ENCODE measurements at regions of chr19 and their contacts with region 1.

Region 1: GRCh38 chr19:4909897-4910593 is 744 bp downstream of the UHRF1 start:
- DNase-seq: peak; percentile 78 to 99 (median 93)

Region 2: GRCh38 chr19:4861077-4861543 is 48.9 kb before region 1 on chr19:
- intact Hi-C with region 1: no loop called
- DNase-seq: no peak

Region 3: DNA sequence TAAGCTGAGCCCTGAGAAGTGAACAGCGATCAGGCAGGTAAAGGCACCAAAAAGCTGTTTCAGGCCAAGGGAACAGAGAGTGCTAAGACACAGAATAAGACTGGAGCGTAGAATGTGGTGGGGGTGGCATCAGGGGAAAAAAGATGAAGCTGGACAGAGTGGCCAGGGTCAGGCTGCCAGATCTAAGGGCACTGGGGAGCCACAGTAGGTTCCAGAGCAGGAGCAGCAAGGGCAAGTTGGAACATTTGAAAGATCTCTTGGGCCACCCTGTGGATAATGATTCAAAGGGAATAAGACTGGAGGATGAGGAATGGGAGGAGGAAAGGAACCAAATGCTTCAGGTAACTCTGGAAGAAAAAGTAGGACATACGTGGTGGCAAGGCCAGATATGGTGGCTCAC is 36.1 kb before region 1 on chr19:
- intact Hi-C with region 1: loop called (anchors 2 kb)
- DNase-seq: no peak

Region 4: DNA sequence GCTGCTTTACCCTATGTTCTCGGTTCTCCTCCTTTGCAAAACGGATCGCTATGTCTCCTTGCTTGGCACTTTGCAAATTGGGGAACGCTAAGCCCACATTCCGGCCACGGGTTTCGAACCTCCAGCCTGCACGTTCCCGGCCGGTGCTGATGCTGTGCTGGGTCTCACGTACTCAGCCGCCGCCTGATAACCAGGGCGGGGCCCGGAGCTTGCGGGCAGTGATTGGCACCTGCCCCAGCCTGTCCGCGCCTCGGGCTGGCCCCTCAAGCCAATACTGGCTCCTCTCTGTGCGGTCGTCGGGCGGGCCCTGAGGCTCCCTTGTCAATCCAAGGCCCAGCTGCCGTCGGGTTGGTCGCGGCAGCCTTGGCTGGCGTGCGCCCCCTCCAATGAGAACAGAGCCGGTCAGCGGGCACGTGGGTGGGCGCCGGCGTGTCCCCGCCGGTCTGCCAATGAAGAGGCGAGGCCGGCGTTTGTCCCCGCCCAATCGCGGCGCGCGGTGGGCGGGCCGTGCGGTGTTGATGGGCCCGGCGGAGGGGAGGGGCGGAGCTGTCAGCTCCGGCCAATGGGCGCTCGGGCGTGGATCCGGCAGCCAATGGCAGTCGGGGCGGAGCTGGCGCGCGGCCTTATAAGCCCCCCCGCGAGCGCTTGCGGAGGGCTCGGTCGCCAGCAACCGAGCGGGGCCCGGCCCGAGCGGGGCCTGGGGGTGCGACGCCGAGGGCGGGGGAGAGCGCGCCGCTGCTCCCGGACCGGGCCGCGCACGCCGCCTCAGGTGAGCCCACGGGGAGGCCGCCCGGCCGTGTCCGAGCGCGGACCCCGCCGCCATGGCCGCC is 58.6 kb after region 1 on chr19 and contains the start of gene KDM4B:
- intact Hi-C with region 1: loop called (anchors 5 kb)
- DNase-seq: peak; percentile 96 to 100 (median 100)

Measured in posterior cingulate gyrus (tissue), 11 donors.